GM10248 (cell line): ENCODE measurements at regions of chr2 and their contacts with region 1.

Region 1: DNA sequence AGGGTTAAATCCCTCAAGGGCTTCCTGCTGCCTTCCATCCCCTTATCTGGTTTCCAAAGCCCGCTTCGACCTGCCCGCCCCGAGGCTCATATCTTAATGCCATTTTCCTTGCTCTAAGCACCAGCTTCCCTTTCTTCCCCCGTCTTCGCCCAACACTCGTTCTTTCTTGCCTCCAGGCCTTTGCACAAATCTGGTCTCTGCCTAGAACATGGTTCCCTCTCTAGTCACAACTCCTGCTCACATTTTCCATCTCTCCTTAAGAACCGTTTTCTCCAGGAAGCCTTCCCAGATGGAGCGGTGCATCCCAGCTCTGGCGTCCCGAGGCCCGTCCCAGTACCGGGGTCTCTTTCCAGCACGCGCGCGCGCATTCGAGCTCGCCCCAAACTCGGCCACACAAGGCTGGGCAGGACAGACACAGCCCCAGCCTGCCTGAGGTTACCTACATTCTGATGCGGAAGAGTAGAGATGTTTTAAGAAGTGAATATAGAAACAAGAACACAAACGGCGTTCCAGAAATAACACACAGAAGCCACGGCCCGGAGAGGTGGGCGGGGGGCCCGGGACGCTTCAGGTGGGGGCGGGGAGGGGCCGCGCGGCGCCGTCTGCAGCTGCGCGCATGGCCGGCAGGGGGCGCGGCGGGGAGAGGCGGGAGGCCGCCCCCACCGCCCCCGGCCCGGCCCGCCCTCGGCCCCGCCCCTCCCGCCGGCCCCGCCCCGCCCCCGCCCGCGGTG is at the start of gene DGKD:
- DNase-seq: peak; percentile 95
- CTCF ChIP-seq: peak; percentile 52

Region 2: DNA sequence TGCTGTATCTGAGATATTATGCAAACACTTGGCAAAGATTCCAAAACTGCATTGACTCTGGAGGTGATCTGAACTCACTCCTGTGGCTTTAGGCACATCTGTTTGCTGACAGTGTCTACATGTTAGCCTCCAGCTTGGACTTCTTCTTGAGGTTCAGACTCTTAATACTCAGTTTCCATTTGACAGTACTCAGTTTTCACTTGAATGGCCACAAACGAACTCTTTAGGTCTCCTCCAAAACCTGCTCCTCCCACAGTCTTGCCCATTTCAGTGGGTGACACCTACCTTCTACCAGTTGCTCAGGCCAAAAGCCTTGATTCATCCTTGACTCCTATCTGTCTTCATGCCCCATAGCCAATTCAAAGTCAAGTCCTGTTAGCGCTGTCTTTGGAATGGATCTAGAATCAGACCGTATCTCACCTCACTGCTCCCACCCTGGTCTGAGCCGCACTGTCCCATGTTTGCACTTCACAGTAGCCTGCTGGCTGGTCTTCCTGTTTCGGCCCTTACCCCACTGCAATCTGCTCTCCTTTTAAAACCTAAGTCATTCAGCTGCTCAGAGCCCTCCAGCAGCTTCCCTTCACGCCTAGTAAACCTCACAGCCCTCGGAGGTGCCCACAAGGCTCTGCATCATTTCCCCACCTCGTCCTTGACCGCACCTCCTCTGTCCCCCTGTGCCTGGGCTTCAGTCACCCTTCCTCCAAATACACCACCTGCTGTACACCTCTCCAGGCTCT is 91.9 kb before region 1 on chr2:
- CTCF ChIA-PET with region 1: no interaction called
- POLR2A ChIA-PET with region 1: no interaction called
- DNase-seq: peak; percentile 53
- CTCF ChIP-seq: no peak

Region 3: DNA sequence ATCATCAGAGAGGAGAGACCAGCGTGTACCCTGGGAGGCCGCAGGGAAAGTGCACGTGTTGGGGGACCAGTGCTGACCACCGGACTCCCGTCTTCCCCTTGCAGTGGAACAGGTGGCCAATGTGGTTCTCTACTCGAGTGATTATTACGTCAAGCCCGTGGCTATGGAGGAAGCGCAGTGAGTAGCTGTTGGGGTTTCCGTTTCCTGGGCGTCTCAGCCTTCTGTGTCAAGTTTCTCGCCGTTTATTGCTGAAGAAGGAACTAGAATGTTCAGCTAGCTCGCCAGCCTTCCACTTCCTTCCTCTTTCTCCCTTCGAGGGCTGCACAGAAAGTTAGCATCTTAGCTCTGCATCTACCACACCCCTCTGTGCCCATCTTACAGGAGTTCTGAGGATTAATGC is 22.4 kb before region 1 on chr2:
- CTCF ChIA-PET with region 1: interaction called, 18 read pairs
- POLR2A ChIA-PET with region 1: no interaction called
- DNase-seq: peak; percentile 66
- CTCF ChIP-seq: no peak

Region 4: GRCh38 chr2:233343171-233343705 is 10.7 kb before region 1 on chr2:
- CTCF ChIA-PET with region 1: interaction called, 10 read pairs
- POLR2A ChIA-PET with region 1: no interaction called
- DNase-seq: no peak
- CTCF ChIP-seq: no peak

Region 5: GRCh38 chr2:233365861-233366520 is 12.1 kb after region 1 on chr2:
- CTCF ChIA-PET with region 1: interaction called, 11 read pairs
- POLR2A ChIA-PET with region 1: interaction called, 3 read pairs
- DNase-seq: no peak
- CTCF ChIP-seq: no peak

Region 6: GRCh38 chr2:233380132-233380895 is 26.4 kb after region 1 on chr2:
- CTCF ChIA-PET with region 1: interaction called, 21 read pairs
- POLR2A ChIA-PET with region 1: interaction called, 3 read pairs
- DNase-seq: no peak
- CTCF ChIP-seq: no peak

Region 7: DNA sequence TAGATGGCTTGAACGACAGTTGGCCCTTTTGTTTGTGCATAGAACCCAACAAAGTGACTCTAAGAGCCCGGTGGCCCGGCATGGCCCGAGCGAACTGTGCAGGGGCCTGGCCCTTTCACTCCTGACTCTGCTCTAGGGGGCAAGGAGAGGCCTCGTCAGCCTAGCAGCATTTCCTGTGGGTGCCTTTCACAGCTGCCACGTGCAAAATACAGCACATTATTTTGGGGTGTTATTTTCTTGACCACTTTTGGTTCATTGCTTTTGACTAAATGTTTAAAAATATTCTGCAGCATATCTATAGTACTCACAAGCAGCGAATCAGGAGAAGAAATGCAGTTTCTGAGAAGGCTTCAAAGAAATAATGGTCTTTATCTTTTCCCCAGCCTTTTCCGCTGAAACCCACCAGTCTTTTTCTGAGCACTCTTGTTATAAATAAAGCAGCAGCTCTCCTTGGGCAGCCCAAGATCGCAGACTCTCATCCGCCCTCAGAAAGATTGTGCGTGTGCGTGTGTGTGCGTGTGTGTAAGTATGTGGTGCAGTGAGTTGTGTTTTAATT is 31.6 kb after region 1 on chr2:
- CTCF ChIA-PET with region 1: interaction called, 13 read pairs
- POLR2A ChIA-PET with region 1: interaction called, 3 read pairs
- DNase-seq: peak; percentile 69
- CTCF ChIP-seq: no peak